Activated naive CD4-positive, alpha-beta T cell treated with anti-CD3 and anti-CD28 coated beads for 36 hours (primary cell): ENCODE measurements at regions of chr6 and their contacts with region 1.

Region 1: DNA sequence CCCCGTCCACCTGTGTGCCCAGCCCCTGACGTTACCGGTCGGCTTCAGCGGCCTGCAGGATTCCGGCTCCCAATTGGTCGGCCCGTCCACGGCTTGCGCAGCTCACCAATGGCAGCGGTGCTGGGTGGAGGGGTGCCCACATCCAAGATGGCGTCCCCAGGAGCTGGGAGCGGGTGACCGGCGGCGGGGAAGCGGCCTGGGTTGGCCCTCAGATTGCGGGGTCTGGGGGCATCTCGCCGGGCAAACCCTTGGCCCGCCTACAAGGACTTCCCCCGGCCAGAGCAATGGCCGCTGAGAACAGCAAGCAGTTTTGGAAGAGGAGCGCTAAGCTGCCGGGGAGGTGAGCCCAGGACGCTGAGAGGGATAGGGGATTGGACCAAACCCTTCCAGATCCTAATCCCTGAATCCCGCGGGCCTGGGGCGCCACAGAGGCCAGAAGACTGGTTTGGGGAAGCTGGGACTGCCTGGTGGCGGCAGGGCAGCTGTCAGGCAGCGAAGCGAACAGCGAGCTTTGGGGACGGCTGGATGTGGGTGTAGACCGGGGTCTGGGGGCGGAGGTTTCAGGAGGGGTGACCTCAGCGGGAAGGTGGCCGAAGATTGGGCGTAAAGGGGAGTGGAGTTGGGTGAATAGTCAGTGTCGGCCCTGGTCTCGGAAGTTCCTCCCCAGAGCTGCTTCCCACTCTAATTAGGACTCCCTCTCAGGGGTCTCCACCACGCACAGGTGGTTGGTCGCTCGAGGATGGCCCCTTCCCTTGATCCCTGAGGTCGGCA is at the starts of genes TBC1D22B and TMEM217:
- DNase-seq: peak; percentile 99
- H3K4me3 Mint-ChIP-seq: peak within 1 kb of the TSS; percentile 80
- H3K27ac Mint-ChIP-seq: peak within 1 kb of the TSS; percentile 87
- H3K4me1 Mint-ChIP-seq: peaks cover 46% of the 10 kb centered on the region
- H3K27me3 Mint-ChIP-seq: no peaks in the 10 kb centered on the region
- total RNA-seq, gene TBC1D22B: 13.4 to 15.1 TPM
- total RNA-seq, gene TMEM217: 0.81 to 0.95 TPM

Region 2: GRCh38 chr6:36885461-36886401 is 372.1 kb before region 1 on chr6 and contains the start of gene C6orf89:
- CTCF ChIA-PET with region 1: no interaction called
- intact Hi-C with region 1: loop called (anchors 5 kb)
- DNase-seq: peak; percentile 99
- H3K4me3 Mint-ChIP-seq: peak within 1 kb of the TSS; percentile 87
- H3K27ac Mint-ChIP-seq: peak within 1 kb of the TSS; percentile 92
- H3K4me1 Mint-ChIP-seq: peaks cover 33% of the 10 kb centered on the region
- H3K27me3 Mint-ChIP-seq: no peaks in the 10 kb centered on the region
- total RNA-seq, gene C6orf89: 24.2 to 24.5 TPM

Region 3: GRCh38 chr6:37190159-37190535 is 67.7 kb before region 1 on chr6:
- CTCF ChIA-PET with region 1: no interaction called
- intact Hi-C with region 1: no loop called
- DNase-seq: peak; percentile 68
- H3K4me3 Mint-ChIP-seq: no peak overlapping the region
- H3K27ac Mint-ChIP-seq: peak overlapping the region; percentile 82
- H3K4me1 Mint-ChIP-seq: peaks cover 77% of the 10 kb centered on the region
- H3K27me3 Mint-ChIP-seq: no peaks in the 10 kb centered on the region

Region 4: DNA sequence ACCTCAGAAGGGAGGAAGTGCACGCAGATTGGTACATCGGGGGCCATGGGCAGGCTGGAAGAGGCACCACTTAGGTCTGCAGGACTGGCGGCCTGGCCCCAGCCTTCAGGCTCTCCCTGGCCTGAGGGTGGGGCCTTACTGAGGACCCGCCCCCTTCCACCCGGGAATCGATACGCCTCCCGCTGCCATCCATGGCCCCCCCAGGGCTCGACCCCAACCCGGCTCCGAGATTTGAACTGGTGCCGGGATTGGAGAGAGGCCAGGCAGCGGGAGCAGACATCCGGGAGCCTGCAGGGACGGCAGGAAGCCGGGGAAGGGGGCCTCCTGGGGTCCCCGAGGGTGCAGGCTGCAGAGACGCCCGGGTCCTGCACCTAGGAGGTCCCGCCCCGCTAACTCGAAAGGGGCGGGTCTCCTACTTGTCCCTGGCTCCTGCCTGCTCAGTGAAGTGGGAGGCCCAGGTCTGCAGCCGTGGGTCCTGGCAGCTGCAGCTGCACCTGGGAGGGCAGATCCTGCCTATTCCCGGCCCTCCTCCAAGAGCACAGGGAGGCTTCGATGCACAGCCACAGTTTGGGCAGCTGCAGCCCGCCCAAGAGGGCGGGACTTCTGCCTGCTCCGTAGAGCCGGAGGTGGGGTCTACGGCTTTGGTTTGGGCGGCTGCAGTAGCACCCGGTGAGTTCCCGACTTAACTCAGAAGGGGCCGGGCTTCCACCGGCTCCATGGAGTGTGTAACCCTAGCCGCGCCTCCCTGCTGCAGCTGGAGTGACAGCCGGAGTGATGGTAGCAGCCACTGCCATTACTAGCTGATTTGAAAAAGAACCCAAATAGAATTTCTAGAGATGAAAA is 35.5 kb before region 1 on chr6:
- CTCF ChIA-PET with region 1: interaction called, 3 read pairs
- intact Hi-C with region 1: loop called (anchors 1 kb)
- DNase-seq: peak; percentile 90
- H3K4me3 Mint-ChIP-seq: peak overlapping the region; percentile 56
- H3K27ac Mint-ChIP-seq: peak overlapping the region; percentile 26
- H3K4me1 Mint-ChIP-seq: peaks cover 24% of the 10 kb centered on the region
- H3K27me3 Mint-ChIP-seq: no peaks in the 10 kb centered on the region

Region 5: GRCh38 chr6:37272834-37273566 is 15.2 kb after region 1 on chr6:
- CTCF ChIA-PET with region 1: interaction called, 3 read pairs
- intact Hi-C with region 1: loop called (anchors 1 kb)
- DNase-seq: peak; percentile 38
- H3K4me3 Mint-ChIP-seq: peak overlapping the region; percentile 27
- H3K27ac Mint-ChIP-seq: peak overlapping the region; percentile 48
- H3K4me1 Mint-ChIP-seq: peaks cover 43% of the 10 kb centered on the region
- H3K27me3 Mint-ChIP-seq: no peaks in the 10 kb centered on the region

Region 6: DNA sequence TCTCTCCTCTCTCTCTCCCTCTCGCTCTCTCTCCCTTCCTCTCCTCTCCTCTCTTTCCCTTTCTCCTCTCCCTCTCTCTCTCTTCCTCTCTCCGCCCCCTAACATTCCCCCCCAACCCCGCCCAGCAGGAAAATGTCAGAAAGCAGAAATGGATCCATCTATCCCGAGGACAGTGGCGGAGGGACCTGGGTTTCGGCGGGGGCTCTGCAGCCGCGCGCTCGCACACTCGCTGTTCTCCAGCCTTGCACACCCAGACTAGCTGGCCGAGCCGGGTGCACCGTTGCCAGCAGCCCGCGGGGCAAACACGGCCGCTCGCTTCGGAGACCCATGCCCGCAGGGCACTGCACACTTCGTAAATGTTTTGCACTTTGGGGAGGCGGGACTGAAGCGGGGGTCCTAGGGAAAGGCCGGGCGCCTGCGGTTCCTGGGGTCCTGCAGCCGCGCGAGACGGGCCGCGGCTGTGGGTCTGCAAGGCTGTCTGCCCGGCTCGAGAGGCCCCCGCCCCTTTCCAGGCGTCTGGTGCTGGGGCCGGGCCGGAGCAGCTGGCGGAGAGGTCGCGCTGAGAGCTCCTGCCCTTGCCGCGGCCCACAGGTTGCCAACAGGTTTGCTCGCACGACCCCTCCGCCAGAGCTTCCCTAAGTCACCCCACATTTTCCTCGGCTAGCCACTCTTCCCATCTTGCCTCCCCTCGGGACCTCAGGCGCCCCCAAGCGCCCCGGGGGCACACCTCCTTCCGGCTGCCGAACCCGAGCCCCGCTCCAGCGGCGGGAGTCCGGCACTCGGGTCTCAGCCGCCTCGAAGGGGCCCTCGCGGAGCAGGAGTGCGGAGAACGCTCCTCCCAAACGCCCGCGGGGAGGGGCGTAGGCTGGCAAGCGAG is 440.7 kb after region 1 on chr6:
- CTCF ChIA-PET with region 1: no interaction called
- intact Hi-C with region 1: loop called (anchors 5 kb)
- DNase-seq: peak; percentile 48
- H3K4me3 Mint-ChIP-seq: peak overlapping the region; percentile 98
- H3K27ac Mint-ChIP-seq: peak overlapping the region; percentile 82
- H3K4me1 Mint-ChIP-seq: peaks cover 18% of the 10 kb centered on the region
- H3K27me3 Mint-ChIP-seq: peaks cover 19% of the 10 kb centered on the region